ENCODE measurements at regions of chr17 and their contacts with region 1.

Region 1: GRCh38 chr17:43970366-43970765 is 16.6 kb upstream of the PYY start:
- DNase-seq: no peak
- H3K4me3 ChIP-seq: no peak overlapping the region
- H3K4me3 Mint-ChIP-seq: no peak overlapping the region
- H3K27ac Mint-ChIP-seq: no peak overlapping the region
- H3K4me1 ChIP-seq: no peaks in the 10 kb centered on the region
- H3K4me1 Mint-ChIP-seq: no peaks in the 10 kb centered on the region
- H3K27me3 ChIP-seq: 0 out of 2 replicates have a peak, but pooled peaks cover 2% of the 10 kb centered on the region
- H3K27me3 Mint-ChIP-seq: peaks cover 16% of the 10 kb centered on the region
- CTCF ChIP-seq: no peak

Region 2: DNA sequence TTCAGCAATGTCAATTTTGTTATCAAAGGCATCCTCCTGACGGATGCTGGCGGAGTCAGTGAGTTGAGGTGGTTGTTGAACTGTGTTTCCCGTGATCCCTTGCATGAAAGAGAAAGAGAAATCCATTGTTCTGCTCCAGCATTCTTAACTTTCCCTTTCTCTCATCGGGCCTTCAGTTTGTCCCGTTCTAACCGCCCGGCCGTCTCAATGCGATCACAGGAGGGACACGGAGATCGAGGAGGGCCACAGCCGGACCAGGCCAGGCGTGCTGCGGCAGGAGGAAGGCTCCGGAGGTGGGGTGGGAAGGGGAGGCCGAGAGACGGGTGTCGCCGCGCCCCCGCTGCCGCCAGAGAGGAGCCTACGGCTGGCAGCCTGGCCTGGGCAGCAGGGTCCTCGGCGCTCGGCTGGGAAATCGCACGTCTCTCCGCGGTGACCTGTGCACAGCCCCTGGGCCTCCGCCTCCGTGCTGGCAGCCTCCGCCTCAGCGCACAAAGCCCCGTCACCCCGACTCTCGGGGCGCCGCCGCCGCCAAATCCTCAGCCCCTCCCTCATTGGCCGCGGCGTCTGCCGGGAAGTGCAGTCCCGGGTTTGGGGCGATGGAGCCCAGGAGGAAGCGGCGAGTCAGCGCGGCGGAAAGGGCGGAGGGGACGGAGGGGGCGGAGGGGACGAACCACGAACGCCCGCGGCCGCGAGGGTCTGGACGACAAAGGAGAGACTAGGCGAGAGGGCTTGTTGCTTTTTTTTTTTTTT is 249.9 kb before region 1 on chr17:
- CTCF ChIA-PET with region 1: no interaction called
- POLR2A ChIA-PET with region 1: no interaction called
- intact Hi-C with region 1: no loop called
- DNase-seq: peak; percentile 74 to 81
- H3K4me3 ChIP-seq: peak overlapping the region; percentile 75
- H3K4me3 Mint-ChIP-seq: peak overlapping the region; percentile 69
- H3K27ac Mint-ChIP-seq: peak overlapping the region; percentile 69
- H3K4me1 ChIP-seq: 0 out of 2 replicates have a peak, but pooled peaks cover 4% of the 10 kb centered on the region
- H3K4me1 Mint-ChIP-seq: peaks cover 28% of the 10 kb centered on the region
- H3K27me3 ChIP-seq: no peaks in the 10 kb centered on the region
- H3K27me3 Mint-ChIP-seq: no peaks in the 10 kb centered on the region
- CTCF ChIP-seq: no peak

Region 3: DNA sequence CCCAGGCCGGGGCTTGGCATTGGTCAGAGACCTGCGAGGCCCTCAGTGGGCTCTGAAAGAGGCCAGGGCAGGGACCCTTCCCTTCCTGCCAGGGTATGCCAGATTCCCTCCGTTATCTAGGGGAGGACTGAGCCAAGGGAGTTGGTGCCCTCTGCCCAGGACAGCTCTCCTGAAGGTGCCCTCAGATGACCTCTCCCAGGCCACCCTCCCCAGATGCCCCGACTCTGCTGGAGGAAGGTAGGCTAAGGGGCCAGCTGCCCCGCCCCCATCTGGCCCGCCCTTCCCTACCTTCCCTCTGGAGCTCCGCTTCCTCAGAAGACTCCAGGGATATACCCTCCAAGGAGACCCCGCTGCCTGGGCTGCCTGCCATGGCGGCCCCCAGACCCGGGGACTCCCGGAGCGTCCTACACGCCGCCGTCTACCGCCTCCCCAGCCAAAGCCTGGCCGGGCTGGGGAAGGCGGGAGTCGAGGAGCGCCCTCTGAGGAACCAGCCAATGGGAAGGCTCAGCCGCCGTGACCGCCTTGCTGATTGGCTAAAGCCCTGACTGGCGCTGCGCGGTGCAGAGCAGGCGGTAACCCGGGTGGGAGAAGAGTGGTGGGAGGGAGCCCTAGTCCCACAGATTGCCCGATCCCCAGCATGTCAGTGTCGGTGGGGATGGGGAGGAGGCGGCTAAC is 70.0 kb before region 1 on chr17:
- CTCF ChIA-PET with region 1: interaction called, 10 read pairs
- POLR2A ChIA-PET with region 1: no interaction called
- intact Hi-C with region 1: no loop called
- DNase-seq: peak; percentile 93
- H3K4me3 ChIP-seq: peak overlapping the region; percentile 65
- H3K4me3 Mint-ChIP-seq: peak overlapping the region; percentile 82
- H3K27ac Mint-ChIP-seq: peak overlapping the region; percentile 28
- H3K4me1 ChIP-seq: peaks cover 7% of the 10 kb centered on the region
- H3K4me1 Mint-ChIP-seq: no peaks in the 10 kb centered on the region
- H3K27me3 ChIP-seq: no peaks in the 10 kb centered on the region
- H3K27me3 Mint-ChIP-seq: peaks cover 8% of the 10 kb centered on the region
- CTCF ChIP-seq: no peak